HepG2 (cell line): ENCODE measurements at regions of chr1 and their contacts with region 1.

Region 1: DNA sequence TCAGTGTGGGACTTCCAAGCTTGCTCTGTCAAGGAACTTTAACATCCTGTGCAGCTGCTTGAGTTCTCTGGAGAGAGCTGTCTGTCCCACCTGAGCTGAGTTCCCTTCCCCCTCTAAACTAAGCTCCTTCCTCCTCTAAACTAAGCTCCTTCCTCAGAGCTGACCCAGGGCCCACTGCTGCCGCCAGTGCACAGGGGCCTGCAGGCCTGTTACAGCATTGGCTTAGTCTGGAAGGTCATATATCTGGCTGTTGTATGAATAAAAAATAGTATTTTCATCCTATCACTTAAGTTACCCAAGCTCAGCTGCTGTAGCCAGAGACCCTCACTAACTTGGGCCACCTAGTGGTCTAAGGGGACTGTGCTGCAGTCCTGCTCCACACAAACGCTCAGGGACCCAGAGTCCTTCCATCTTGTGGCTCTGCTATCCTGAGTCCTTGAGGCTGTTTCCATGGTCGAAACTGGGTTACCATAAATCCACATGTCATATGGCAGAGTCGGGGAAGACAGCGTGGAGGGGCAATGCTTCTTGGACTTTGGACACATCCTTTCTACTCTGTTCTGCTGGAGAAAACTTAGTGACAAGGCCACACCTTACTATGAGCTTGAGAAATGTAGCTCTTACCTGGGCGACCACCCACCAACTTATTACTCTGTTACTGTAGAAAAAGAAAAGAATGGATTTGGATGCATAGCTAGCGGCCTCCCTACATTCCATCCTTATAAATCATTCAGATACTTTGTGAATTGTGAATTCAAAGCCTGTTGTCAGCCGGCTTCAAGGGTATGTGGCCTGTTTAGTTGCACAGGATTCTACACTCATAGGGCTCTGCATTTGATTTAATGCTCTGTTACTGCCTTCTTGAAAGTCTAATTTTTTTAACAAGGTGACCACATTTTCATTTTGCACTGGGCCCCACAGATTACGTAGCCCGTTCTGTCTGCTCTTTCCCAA is 71.4 kb upstream of the GCLM start:
- DNase-seq: peak; percentile 58
- ATAC-seq: peak; percentile 92
- H3K4me3 ChIP-seq: peak overlapping the region; percentile 41 to 70 (median 49)
- H3K27ac ChIP-seq: peak overlapping the region; percentile 72
- H3K4me1 ChIP-seq: peaks cover 51% of the 10 kb centered on the region
- H3K27me3 ChIP-seq: 0 out of 5 replicates have a peak, but pooled peaks cover 0 to 3% of the 10 kb centered on the region in 2 experiments
- CTCF ChIP-seq: peak; percentile 81
- EP300 ChIP-seq: no peak
- POLR2A ChIP-seq: no peak
- RAD21 ChIP-seq: peak; percentile 49

Region 2: GRCh38 chr1:93878889-93879586 is 101.6 kb before region 1 on chr1 and contains the start of gene DNTTIP2:
- CTCF ChIA-PET with region 1: no interaction called
- POLR2A ChIA-PET with region 1: interaction called, 26 read pairs
- in situ Hi-C with region 1: no loop called
- intact Hi-C with region 1: no loop called
- DNase-seq: peak; percentile 87
- ATAC-seq: peak; percentile 96
- H3K4me3 ChIP-seq: peak within 1 kb of the TSS; percentile 84 to 97 (median 95)
- H3K27ac ChIP-seq: peak within 1 kb of the TSS; percentile 92
- H3K4me1 ChIP-seq: peaks cover 31% of the 10 kb centered on the region
- H3K27me3 ChIP-seq: no peaks in the 10 kb centered on the region; a peak in 1 of 5 replicates
- CTCF ChIP-seq: peak; percentile 22; the same call in 1 of the 2 replicates
- EP300 ChIP-seq: 0 out of 4 replicates have a peak, but pooled peaks of 1 of the 2 experiments have one; percentile 45
- POLR2A ChIP-seq: peak; percentile 95 to 99
- RAD21 ChIP-seq: no peak; the same call in 1 of the 2 replicates
- total RNA-seq, gene DNTTIP2: 63.3 and 93.0 TPM in 2 replicates

Region 3: GRCh38 chr1:93909146-93910050 is 71.2 kb before region 1 on chr1 and contains the start of gene GCLM:
- CTCF ChIA-PET with region 1: interaction called, 17 read pairs
- POLR2A ChIA-PET with region 1: interaction called, 17 read pairs
- in situ Hi-C with region 1: no loop called
- intact Hi-C with region 1: no loop called
- DNase-seq: peak; percentile 88
- ATAC-seq: peak; percentile 93
- H3K4me3 ChIP-seq: peak within 1 kb of the TSS; percentile 74 to 92 (median 86)
- H3K27ac ChIP-seq: peak within 1 kb of the TSS; percentile 83
- H3K4me1 ChIP-seq: peaks cover 47% of the 10 kb centered on the region
- H3K27me3 ChIP-seq: no peaks in the 10 kb centered on the region; a peak in 1 of 5 replicates
- CTCF ChIP-seq: peak; percentile 91
- EP300 ChIP-seq: peak in 1 of 2 experiments; percentile 28; a peak in 2 of 4 replicates
- POLR2A ChIP-seq: peak in 1 of 2 experiments; percentile 32; a peak in 1 of 4 replicates
- RAD21 ChIP-seq: peak; percentile 94
- total RNA-seq, gene GCLM: 28.1 and 29.9 TPM in 2 replicates

Region 4: GRCh38 chr1:93964777-93965200 is 15.8 kb before region 1 on chr1:
- CTCF ChIA-PET with region 1: no interaction called
- POLR2A ChIA-PET with region 1: interaction called, 65 read pairs
- in situ Hi-C with region 1: no loop called
- intact Hi-C with region 1: no loop called
- DNase-seq: peak; percentile 90
- ATAC-seq: peak; percentile 88
- H3K4me3 ChIP-seq: peak overlapping the region in 1 of 3 experiments; percentile 20; a peak in 2 of 6 replicates
- H3K27ac ChIP-seq: peak overlapping the region; percentile 8
- H3K4me1 ChIP-seq: peaks cover 60% of the 10 kb centered on the region
- H3K27me3 ChIP-seq: no peaks in the 10 kb centered on the region
- CTCF ChIP-seq: no peak
- EP300 ChIP-seq: peak in 1 of 2 experiments; percentile 85; a peak in 2 of 4 replicates
- POLR2A ChIP-seq: 0 out of 4 replicates have a peak, but pooled peaks of 1 of the 2 experiments have one; percentile 15
- RAD21 ChIP-seq: no peak